GM10248 (cell line): ENCODE measurements at regions of chr17 and their contacts with region 1.

Region 1: DNA sequence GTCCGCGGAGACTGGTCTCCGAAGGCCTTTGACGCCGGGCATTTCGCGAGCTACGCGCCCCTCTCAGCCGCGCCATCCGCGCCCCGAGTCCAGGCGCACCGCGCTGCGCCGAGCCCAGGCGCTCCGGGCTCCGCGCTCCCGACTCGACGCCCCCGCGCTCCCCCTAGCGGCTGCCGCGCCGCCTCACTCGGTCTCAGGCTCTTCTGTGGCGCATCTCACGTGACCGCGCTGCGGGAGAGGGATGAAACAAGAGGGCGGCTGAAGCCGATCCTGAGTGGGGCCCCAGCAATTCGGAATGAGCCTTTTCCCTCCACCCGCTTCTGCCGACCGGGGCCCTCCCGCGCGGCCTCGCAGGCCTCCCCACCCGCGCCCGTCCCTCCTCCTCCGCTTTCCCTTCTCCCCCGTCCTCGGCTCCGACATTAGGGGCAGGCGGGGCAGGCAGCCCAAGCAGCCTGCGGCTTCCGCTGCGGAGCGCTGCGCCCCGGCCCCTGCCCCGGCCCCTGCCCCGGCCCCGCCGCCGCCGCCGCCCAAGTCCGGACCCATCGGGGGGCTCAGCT is 42.5 kb upstream of the AMZ2 start:
- DNase-seq: peak; percentile 91
- CTCF ChIP-seq: peak; percentile 94

Region 2: DNA sequence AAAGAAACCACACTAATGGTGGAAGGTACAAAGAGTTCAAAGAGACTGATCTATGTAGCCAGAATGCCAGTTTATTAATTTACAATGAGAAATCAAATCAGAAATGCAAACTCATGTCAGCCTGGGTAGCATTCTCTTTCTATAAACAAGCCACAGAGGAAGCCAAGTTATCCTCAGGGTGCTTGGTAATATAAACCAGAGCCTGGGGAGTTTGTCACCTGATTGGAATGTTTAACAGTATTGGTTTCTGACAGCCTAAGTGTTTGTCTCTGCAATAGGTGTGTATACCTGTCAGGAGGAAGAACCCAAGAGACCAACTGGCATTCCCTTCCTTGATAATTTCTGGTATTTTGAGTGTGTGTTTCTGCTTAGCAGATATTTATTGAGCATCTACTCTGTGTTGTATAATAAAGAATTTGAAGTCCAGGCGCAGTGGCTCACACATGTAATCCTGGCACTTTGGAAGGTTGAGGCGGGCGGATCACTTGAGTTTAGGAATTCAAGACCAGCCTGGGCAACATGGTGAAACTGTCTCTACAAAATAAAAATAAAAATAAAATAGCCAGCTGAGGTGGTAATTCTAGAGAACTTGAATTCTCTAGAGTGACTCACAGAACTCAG is 205.9 kb before region 1 on chr17:
- CTCF ChIA-PET with region 1: no interaction called
- POLR2A ChIA-PET with region 1: no interaction called
- DNase-seq: no peak
- CTCF ChIP-seq: no peak

Region 3: DNA sequence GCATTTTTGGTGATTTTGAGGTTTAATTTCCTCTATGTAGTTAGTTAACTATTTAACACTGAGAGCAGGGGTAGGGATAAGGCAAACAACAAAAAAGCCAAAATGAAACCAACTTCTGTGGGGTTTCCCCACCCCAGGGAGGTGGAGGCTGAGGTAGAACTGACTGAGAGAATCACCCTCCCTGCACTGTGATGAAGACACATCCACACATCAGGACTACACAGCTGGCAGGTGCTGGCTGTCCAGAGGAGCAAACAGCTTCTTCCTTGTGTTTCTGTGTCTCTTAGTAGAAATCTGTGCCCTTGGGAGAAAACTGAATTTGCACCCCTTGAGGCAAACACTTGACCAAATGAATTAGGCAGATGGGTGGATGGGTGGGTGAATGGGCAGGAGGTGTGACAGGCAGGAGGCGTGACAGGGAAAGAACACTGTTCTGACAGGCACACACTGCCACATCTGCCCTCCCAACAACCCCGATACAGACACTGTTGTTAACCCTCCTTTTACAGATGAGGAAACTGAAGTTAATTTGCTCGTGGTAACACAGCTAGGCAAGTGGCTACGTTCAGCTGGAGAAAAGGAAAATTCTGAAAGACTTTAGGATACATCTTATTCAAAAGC is 20.4 kb before region 1 on chr17:
- CTCF ChIA-PET with region 1: interaction called, 83 read pairs
- POLR2A ChIA-PET with region 1: no interaction called
- DNase-seq: peak; percentile 76
- CTCF ChIP-seq: no peak

Region 4: GRCh38 chr17:68221760-68222159 is 16.4 kb after region 1 on chr17:
- CTCF ChIA-PET with region 1: interaction called, 10 read pairs
- POLR2A ChIA-PET with region 1: no interaction called
- DNase-seq: no peak
- CTCF ChIP-seq: no peak

Region 5: DNA sequence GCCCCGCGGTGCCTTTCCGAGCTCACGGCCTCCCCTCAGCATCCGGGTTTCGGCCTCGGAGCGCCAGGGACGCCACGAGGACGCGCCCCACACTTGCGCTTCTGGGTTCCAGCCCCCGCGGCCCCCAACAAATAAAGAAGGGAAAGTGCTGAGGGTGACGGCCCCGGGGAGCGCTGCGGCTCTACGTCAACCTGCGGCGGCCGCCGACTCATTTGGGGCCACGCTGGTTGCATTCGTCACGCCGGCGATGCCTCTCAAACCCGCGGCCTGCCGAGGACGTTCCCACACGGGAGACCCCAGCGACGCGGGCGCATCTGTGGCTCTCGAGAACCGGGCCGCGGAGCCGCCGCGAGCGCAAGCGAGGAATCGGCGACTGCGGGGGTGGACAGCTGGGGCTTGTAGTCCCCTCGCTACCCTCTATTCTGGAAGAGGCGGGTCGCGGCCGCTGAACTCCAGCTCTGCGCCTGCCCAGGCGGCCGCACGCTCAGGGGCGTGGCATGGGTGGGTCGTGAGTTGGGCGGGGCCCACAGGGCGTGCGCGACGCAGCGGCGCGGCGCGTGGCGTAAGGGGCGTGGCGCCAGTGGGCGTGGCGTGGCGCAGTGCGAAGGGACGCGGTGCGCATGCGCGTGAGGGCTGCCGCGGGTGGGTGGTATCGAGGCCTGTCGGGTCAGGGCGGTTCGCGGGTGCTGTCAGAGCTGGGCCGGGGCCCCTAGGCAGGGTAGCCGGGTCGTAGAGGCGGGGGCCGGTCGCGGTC is 42.3 kb after region 1 on chr17 and contains the start of gene AMZ2:
- CTCF ChIA-PET with region 1: interaction called, 14 read pairs
- POLR2A ChIA-PET with region 1: no interaction called
- DNase-seq: peak; percentile 95
- CTCF ChIP-seq: no peak

Region 6: GRCh38 chr17:68257934-68258333 is 52.6 kb after region 1 on chr17:
- CTCF ChIA-PET with region 1: no interaction called
- POLR2A ChIA-PET with region 1: no interaction called
- DNase-seq: no peak
- CTCF ChIP-seq: no peak